Activated naive CD4-positive, alpha-beta T cell treated with anti-CD3 and anti-CD28 coated beads for 36 hours (primary cell): ENCODE measurements at regions of chr7 and their contacts with region 1.

Region 1: DNA sequence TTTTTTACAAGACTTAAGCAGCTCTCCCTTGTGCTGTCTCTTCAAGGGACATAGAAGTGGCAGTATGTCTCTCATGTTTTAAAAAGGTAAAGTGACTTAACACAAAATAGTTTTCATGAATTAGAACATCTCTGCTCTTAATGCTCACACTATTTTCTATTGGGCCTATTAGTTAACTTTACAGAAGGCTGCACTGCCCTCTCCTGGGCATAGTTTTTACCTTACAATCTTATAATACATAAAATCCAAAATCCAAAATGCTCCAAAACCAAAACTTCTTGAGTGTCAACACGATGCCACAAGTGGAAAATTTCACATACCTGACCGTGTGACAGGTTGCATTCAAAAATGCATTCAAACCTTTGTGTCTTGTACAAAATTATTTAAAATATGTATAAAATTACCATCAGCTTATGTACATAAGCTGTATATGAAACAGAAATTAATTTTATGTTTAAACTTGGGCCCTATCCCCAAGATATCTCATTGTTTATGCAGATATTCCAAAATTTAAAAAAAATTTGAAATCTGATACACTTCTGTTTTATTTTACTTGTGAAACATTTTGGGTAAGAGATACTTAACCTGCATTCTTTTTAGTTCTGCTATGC is 25.8 kb downstream of the TES start:
- DNase-seq: peak; percentile 73
- H3K4me3 Mint-ChIP-seq: no peak overlapping the region
- H3K27ac Mint-ChIP-seq: no peak overlapping the region
- H3K4me1 Mint-ChIP-seq: peaks cover 69% of the 10 kb centered on the region
- H3K27me3 Mint-ChIP-seq: no peaks in the 10 kb centered on the region

Region 2: DNA sequence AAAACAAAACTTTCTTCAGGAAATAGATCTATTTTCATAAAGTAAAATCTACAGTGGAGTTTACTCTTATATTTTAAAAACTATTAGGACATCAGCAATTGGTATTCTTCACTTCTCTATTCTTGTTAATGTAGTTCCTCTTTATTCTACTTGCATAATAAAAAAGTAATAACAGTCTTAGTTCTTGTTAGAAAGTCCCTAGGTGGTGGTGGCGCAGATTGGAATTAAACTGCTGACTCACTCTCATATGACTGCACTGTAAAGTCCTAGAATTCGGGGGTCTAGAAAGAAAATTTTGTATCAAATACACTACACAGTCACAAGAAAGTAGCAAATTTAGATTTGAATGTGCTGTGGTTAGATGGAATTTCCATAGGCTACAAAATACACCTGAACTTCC is 70.4 kb before region 1 on chr7:
- CTCF ChIA-PET with region 1: interaction called, 36 read pairs
- intact Hi-C with region 1: no loop called
- DNase-seq: no peak
- H3K4me3 Mint-ChIP-seq: no peak overlapping the region
- H3K27ac Mint-ChIP-seq: no peak overlapping the region
- H3K4me1 Mint-ChIP-seq: peaks cover 5% of the 10 kb centered on the region
- H3K27me3 Mint-ChIP-seq: peaks cover 11% of the 10 kb centered on the region

Region 3: DNA sequence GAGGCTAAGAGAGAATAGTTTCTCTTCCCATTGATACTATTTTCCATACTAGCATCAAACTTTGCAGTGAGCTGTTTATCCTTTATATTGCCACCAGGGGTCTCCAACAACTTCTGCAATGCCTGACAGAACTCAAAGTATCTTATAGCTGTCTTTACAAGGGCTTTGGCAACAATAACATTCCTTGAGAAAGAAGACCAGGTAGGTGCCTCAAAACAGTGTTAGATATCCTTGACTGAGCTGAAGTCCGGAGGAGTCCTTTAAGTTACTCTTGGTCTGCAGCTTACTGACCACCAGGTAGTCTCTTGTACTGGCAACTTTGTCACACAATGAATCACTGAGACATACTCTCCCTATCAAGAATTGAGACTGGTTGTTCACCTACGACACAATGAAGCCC is 55.8 kb before region 1 on chr7:
- CTCF ChIA-PET with region 1: interaction called, 195 read pairs
- intact Hi-C with region 1: loop called (anchors 1 kb)
- DNase-seq: peak; percentile 20
- H3K4me3 Mint-ChIP-seq: no peak overlapping the region
- H3K27ac Mint-ChIP-seq: no peak overlapping the region
- H3K4me1 Mint-ChIP-seq: no peaks in the 10 kb centered on the region
- H3K27me3 Mint-ChIP-seq: no peaks in the 10 kb centered on the region

Region 4: GRCh38 chr7:116197360-116197759 is 38.8 kb before region 1 on chr7:
- CTCF ChIA-PET with region 1: interaction called, 17 read pairs
- intact Hi-C with region 1: no loop called
- DNase-seq: no peak
- H3K4me3 Mint-ChIP-seq: no peak overlapping the region
- H3K27ac Mint-ChIP-seq: no peak overlapping the region
- H3K4me1 Mint-ChIP-seq: no peaks in the 10 kb centered on the region
- H3K27me3 Mint-ChIP-seq: no peaks in the 10 kb centered on the region

Region 5: DNA sequence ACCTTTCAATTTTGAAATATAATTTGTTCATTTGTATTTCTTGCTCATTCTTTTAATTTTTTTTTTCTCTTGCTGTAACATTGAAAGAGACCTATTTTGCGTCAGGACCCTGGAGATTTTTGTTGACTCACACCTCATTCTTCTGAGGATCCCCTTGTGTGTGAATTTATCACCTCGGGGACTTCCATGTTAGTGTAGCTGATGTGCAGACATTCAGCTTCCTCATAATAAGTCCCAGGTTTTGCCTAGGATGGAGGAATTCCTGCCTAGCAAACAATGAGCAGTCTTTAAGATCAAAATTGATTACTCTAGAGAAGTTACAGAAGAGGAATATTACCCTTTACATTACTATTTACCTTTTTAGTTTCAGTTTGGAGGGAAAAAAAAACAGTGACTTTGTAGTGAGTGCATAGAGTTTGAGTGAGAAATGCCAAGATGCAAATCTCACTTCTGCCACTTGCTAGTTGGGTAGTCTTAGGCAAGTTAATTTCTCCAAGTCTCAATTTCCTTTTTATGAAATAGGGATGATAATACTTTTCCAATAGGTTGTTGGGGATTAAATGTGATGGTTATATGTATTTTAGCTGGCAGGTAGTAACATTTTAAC is 11.5 kb before region 1 on chr7:
- CTCF ChIA-PET with region 1: interaction called, 20 read pairs
- intact Hi-C with region 1: no loop called
- DNase-seq: no peak
- H3K4me3 Mint-ChIP-seq: peak overlapping the region; percentile 41
- H3K27ac Mint-ChIP-seq: peak overlapping the region; percentile 58
- H3K4me1 Mint-ChIP-seq: peaks cover 81% of the 10 kb centered on the region
- H3K27me3 Mint-ChIP-seq: no peaks in the 10 kb centered on the region